Body of pancreas (tissue), 4 donors: ENCODE measurements at regions of chr5 and their contacts with region 1.

Region 1: GRCh38 chr5:91384671-91385430 is 1.7 kb upstream of the ARRDC3 start:
- DNase-seq: peak; percentile 53 to 85 (median 64)
- ATAC-seq: peak; percentile 22
- H3K4me3 ChIP-seq: no peak overlapping the region
- H3K27ac ChIP-seq: peak overlapping the region; percentile 95 to 100 (median 98)
- H3K4me1 ChIP-seq: peaks cover 10% of the 10 kb centered on the region
- H3K27me3 ChIP-seq: no peaks in the 10 kb centered on the region
- CTCF ChIP-seq: peak; percentile 91 to 100 (median 100)
- POLR2A ChIP-seq: no peak

Region 2: GRCh38 chr5:91219803-91220371 is 165.0 kb before region 1 on chr5:
- intact Hi-C with region 1: loop called (anchors 5 kb)
- DNase-seq: peak in 1 of 4 donors; percentile 21
- ATAC-seq: no peak
- H3K4me3 ChIP-seq: no peak overlapping the region
- H3K27ac ChIP-seq: no peak overlapping the region
- H3K4me1 ChIP-seq: peaks cover 4% of the 10 kb centered on the region
- H3K27me3 ChIP-seq: no peaks in the 10 kb centered on the region
- CTCF ChIP-seq: no peak
- POLR2A ChIP-seq: no peak